Naive thymus-derived CD8-positive, alpha-beta T cell (primary cell): ENCODE measurements at regions of chr13 and their contacts with region 1.

Region 1: GRCh38 chr13:74287724-74288169 is 153.5 kb upstream of the KLF12 start:
- DNase-seq: peak; percentile 73 to 98 (median 89)
- ATAC-seq: peak; percentile 63 to 65
- H3K4me3 Mint-ChIP-seq: peak overlapping the region; percentile 72 to 90 (median 86)
- H3K27ac Mint-ChIP-seq: peak overlapping the region; percentile 92 to 100 (median 96)
- H3K4me1 Mint-ChIP-seq: peaks cover 28 to 76% (median 66%) of the 10 kb centered on the region in 4 donors
- H3K27me3 Mint-ChIP-seq: peaks cover 0 to 2% (median 0%) of the 10 kb centered on the region in 5 donors

Region 2: GRCh38 chr13:73765651-73766384 is 521.9 kb before region 1 on chr13:
- POLR2A ChIA-PET with region 1: interaction called, 17 read pairs
- DNase-seq: peak; percentile 69 to 95 (median 84)
- ATAC-seq: peak; percentile 83 to 91
- H3K4me3 Mint-ChIP-seq: peak overlapping the region; percentile 79 to 89 (median 86)
- H3K27ac Mint-ChIP-seq: peak overlapping the region; percentile 92 to 100 (median 98)
- H3K4me1 Mint-ChIP-seq: peaks cover 44 to 87% (median 81%) of the 10 kb centered on the region in 4 donors
- H3K27me3 Mint-ChIP-seq: no peaks in the 10 kb centered on the region

Region 3: GRCh38 chr13:74080762-74081161 is 207.0 kb before region 1 on chr13:
- POLR2A ChIA-PET with region 1: no interaction called
- DNase-seq: no peak
- ATAC-seq: peak; percentile 49 to 62
- H3K4me3 Mint-ChIP-seq: no peak overlapping the region
- H3K27ac Mint-ChIP-seq: peak overlapping the region in 5 of 10 donors; percentile 23 to 79 (median 56)
- H3K4me1 Mint-ChIP-seq: peaks cover 27 to 82% (median 67%) of the 10 kb centered on the region in 4 donors
- H3K27me3 Mint-ChIP-seq: no peaks in the 10 kb centered on the region

Region 4: DNA sequence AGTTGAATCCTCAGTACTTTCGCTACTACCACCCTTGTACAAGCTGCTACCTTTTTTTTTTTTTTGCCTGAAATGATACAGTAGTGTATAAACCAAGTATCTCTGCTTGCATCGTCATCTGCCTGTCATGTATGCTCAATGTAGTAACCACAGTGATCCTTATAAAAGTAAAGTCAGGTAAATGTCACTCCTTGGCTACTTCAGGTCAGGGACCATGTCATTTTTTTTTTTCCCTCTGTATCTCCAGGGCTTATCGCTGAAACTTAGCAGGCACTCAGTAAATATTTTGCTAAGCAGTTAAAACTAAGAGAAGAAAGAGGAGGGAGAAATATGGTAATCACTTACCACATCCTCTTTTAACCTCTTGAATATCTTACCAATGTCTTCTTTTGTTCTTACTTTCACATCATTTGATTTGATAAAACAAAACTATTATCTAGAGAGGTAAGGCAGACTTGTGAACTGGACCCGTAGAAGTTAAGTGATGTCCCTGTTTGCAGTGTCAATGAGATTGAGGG is 56.7 kb before region 1 on chr13:
- POLR2A ChIA-PET with region 1: interaction called, 30 read pairs
- DNase-seq: peak in 4 of 10 donors; percentile 13 to 72 (median 64)
- ATAC-seq: peak; percentile 79 to 88
- H3K4me3 Mint-ChIP-seq: peak overlapping the region; percentile 69 to 94 (median 88)
- H3K27ac Mint-ChIP-seq: peak overlapping the region; percentile 85 to 98 (median 92)
- H3K4me1 Mint-ChIP-seq: peaks cover 12 to 38% (median 34%) of the 10 kb centered on the region in 4 donors
- H3K27me3 Mint-ChIP-seq: no peaks in the 10 kb centered on the region

Region 5: GRCh38 chr13:74246487-74246886 is 41.3 kb before region 1 on chr13:
- POLR2A ChIA-PET with region 1: interaction called, 11 read pairs
- DNase-seq: peak in 3 of 10 donors; percentile 30 to 40 (median 34)
- ATAC-seq: peak; percentile 35 to 48
- H3K4me3 Mint-ChIP-seq: peak overlapping the region; percentile 60 to 88 (median 83)
- H3K27ac Mint-ChIP-seq: peak overlapping the region; percentile 92 to 99 (median 94)
- H3K4me1 Mint-ChIP-seq: peaks cover 53 to 96% (median 95%) of the 10 kb centered on the region in 4 donors
- H3K27me3 Mint-ChIP-seq: no peaks in the 10 kb centered on the region

Region 6: DNA sequence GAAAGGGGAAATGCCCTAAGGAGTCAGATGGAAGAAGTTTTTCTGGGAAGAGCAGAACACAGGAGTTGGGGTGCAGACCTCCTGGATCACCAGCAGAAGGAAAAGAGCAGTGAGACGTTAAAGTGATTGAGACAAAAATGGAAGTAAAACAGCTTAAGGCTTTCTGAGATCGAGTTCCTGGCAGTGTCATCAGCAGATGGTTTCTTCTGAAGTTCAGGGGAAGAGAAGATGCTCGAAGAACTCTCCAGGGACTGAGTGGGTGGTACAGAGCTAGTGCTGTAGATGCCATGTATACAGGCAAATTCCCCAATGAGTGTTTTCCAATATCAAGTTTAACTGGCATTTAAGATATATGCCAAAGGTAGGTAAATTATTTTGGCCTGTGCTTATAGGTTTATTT is 118.7 kb after region 1 on chr13:
- POLR2A ChIA-PET with region 1: no interaction called
- DNase-seq: no peak
- ATAC-seq: no peak
- H3K4me3 Mint-ChIP-seq: peak overlapping the region in 1 of 10 donors; percentile 8
- H3K27ac Mint-ChIP-seq: no peak overlapping the region
- H3K4me1 Mint-ChIP-seq: peaks cover 0 to 12% (median 3%) of the 10 kb centered on the region in 4 donors
- H3K27me3 Mint-ChIP-seq: peaks cover 0 to 2% (median 0%) of the 10 kb centered on the region in 5 donors